H1 (cell line): ENCODE measurements at regions of chr20 and their contacts with region 1.

Region 1: GRCh38 chr20:45138561-45139300 is 14.5 kb upstream of the WFDC12 start:
- DNase-seq: peak; percentile 56 to 99
- H3K4me3 ChIP-seq: no peak overlapping the region
- H3K27ac ChIP-seq: no peak overlapping the region
- H3K4me1 ChIP-seq: no peaks in the 10 kb centered on the region
- H3K27me3 ChIP-seq: no peaks in the 10 kb centered on the region
- CTCF ChIP-seq: peak; percentile 95 to 99 (median 97)
- EP300 ChIP-seq: no peak
- POLR2A ChIP-seq: no peak
- RAD21 ChIP-seq: peak; percentile 88 to 92

Region 2: GRCh38 chr20:45061244-45061643 is 77.5 kb before region 1 on chr20:
- CTCF ChIA-PET with region 1: no interaction called
- POLR2A ChIA-PET with region 1: no interaction called
- DNase-seq: no peak
- H3K4me3 ChIP-seq: no peak overlapping the region
- H3K27ac ChIP-seq: no peak overlapping the region
- H3K4me1 ChIP-seq: peaks cover 0 to 2% (median 0%) of the 10 kb centered on the region in 4 experiments; a peak in 1 of 7 replicates
- H3K27me3 ChIP-seq: no peaks in the 10 kb centered on the region
- CTCF ChIP-seq: no peak
- EP300 ChIP-seq: no peak
- POLR2A ChIP-seq: no peak
- RAD21 ChIP-seq: no peak

Region 3: GRCh38 chr20:45111799-45112471 is 26.8 kb before region 1 on chr20:
- CTCF ChIA-PET with region 1: interaction called, 28 read pairs
- POLR2A ChIA-PET with region 1: no interaction called
- DNase-seq: peak in 1 of 2 experiments; percentile 75
- H3K4me3 ChIP-seq: no peak overlapping the region; a peak in 2 of 8 replicates
- H3K27ac ChIP-seq: no peak overlapping the region
- H3K4me1 ChIP-seq: peaks cover 0 to 7% (median 2%) of the 10 kb centered on the region in 4 experiments; a peak in 5 of 7 replicates
- H3K27me3 ChIP-seq: no peaks in the 10 kb centered on the region
- CTCF ChIP-seq: peak; percentile 63 to 69 (median 64)
- EP300 ChIP-seq: no peak
- POLR2A ChIP-seq: no peak
- RAD21 ChIP-seq: peak; percentile 50 to 61

Region 4: GRCh38 chr20:45149062-45149461 is 10.3 kb after region 1 on chr20:
- CTCF ChIA-PET with region 1: interaction called, 17 read pairs
- POLR2A ChIA-PET with region 1: no interaction called
- DNase-seq: no peak
- H3K4me3 ChIP-seq: no peak overlapping the region
- H3K27ac ChIP-seq: no peak overlapping the region
- H3K4me1 ChIP-seq: no peaks in the 10 kb centered on the region
- H3K27me3 ChIP-seq: no peaks in the 10 kb centered on the region; a peak in 2 of 7 replicates
- CTCF ChIP-seq: no peak
- EP300 ChIP-seq: no peak
- POLR2A ChIP-seq: no peak
- RAD21 ChIP-seq: no peak

Region 5: DNA sequence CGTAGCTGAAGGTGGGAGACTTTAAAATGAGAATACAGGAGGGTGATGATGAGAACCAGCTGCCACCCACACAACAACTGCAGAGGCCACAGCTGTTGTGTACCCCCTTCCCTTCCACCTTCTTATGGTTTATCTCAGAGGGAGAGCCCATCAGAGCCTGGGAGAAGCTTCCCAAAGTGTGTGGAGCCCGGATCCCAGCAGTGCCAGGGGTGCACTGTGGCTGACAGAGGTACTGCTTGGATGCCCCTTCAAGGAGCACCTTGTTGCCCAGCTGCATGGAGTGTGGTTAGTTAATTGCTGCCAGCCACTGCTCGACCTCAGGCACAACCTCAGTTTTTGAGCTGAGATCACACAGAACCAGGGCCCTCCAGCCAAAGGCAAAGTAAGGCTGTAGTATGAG is 48.9 kb after region 1 on chr20:
- CTCF ChIA-PET with region 1: interaction called, 18 read pairs
- POLR2A ChIA-PET with region 1: no interaction called
- DNase-seq: no peak
- H3K4me3 ChIP-seq: no peak overlapping the region
- H3K27ac ChIP-seq: no peak overlapping the region
- H3K4me1 ChIP-seq: no peaks in the 10 kb centered on the region
- H3K27me3 ChIP-seq: no peaks in the 10 kb centered on the region
- CTCF ChIP-seq: peak; percentile 10 to 34 (median 12); a peak in 2 of 4 replicates
- EP300 ChIP-seq: no peak
- POLR2A ChIP-seq: no peak
- RAD21 ChIP-seq: no peak

Region 6: DNA sequence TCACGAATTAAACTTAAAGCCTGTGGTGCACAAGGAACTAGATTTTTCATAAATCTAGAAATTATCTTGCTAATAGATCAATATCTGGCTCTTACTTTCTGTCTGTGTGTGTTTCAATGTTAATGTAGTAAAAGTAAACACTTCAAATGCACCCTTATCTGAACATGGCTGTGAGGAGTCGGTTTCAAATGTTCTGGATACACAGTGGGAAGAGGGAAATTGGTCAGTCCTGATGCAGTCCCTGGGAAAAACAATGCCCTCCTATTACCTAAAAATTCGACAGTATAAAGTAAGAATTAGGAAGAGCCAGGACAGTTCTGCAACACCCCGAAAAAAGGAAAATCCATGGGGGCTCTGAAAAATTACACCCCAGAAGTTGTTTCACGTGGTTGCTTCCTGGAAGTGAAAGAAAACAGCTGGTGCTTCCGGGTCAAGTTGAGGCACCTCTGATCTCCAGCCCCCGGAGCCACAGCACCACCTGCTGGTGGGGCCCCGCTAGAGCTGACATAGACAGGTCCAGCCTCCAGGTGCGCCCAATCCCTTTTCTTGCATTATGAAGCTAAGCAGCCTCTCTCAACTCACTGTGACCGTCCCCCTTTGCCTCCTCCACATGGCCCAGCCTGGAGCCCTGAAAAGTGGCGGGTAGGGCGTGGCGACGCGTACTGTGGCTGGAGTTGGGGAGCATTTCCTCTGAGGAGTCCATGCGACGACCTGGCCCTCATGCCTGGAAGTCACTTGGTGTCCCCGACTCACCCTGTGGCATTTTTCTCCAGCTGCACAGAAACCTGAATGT is 90.7 kb after region 1 on chr20:
- CTCF ChIA-PET with region 1: interaction called, 17 read pairs
- POLR2A ChIA-PET with region 1: no interaction called
- DNase-seq: peak; percentile 21 to 96
- H3K4me3 ChIP-seq: no peak overlapping the region
- H3K27ac ChIP-seq: no peak overlapping the region
- H3K4me1 ChIP-seq: no peaks in the 10 kb centered on the region
- H3K27me3 ChIP-seq: no peaks in the 10 kb centered on the region; a peak in 1 of 7 replicates
- CTCF ChIP-seq: peak; percentile 91 to 97 (median 93)
- EP300 ChIP-seq: no peak
- POLR2A ChIP-seq: no peak
- RAD21 ChIP-seq: peak; percentile 85 to 90